ENCODE measurements at regions of chr11 and their contacts with region 1.

Region 1: DNA sequence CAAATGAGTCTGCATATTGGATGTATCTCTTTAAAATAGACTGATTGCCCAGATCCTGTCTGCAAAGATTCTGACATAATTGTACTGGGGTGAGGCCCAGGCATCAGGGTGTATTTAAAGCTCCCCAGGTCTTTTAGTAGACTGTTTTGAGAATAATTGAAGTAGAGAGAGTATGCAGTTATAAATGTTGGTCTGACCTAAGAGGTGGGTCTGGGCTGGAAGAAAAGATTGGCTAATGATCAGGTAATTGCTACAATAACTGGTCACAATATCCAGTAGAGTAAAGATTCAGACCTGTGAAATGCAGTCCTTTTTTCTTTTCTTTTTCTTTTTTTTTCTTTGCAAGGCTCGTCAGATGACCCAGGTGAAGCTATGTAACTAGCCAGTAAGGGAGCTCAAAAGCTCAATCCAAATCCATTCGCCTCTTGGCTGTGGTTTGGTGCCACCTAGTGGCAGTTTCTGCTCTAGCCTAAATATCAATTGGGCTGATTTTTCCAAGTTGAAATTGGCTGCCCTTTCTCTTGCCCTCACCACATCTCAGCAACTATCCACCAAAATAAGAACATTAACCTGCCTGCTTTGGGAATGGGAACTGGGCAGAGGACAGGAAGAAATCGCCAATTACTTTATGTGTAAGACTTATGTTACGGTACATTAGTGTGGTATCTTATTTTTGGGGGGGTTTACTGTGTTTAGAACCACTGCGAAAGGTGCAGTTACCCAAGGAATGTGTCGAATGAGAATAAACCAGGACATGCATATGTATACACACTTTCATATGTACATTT is 45.9 kb downstream of the ZNF143 start:
- DNase-seq: peak; percentile 61 to 87 (median 71)
- ATAC-seq: peak; percentile 97
- H3K4me3 ChIP-seq: no peak overlapping the region
- H3K27ac ChIP-seq: no peak overlapping the region
- H3K4me1 ChIP-seq: no peaks in the 10 kb centered on the region
- H3K27me3 ChIP-seq: no peaks in the 10 kb centered on the region
- CTCF ChIP-seq: peak; percentile 85 to 94 (median 86)
- EP300 ChIP-seq: no peak
- POLR2A ChIP-seq: no peak
- RAD21 ChIP-seq: peak; percentile 87 to 94

Region 2: GRCh38 chr11:9109939-9110731 is 396.5 kb before region 1 on chr11:
- CTCF ChIA-PET with region 1: no interaction called
- POLR2A ChIA-PET with region 1: no interaction called
- in situ Hi-C with region 1: no loop called
- intact Hi-C with region 1: no loop called
- DNase-seq: no peak
- ATAC-seq: no peak
- H3K4me3 ChIP-seq: no peak overlapping the region
- H3K27ac ChIP-seq: no peak overlapping the region
- H3K4me1 ChIP-seq: no peaks in the 10 kb centered on the region
- H3K27me3 ChIP-seq: no peaks in the 10 kb centered on the region
- CTCF ChIP-seq: no peak
- EP300 ChIP-seq: no peak
- POLR2A ChIP-seq: no peak
- RAD21 ChIP-seq: no peak

Region 3: DNA sequence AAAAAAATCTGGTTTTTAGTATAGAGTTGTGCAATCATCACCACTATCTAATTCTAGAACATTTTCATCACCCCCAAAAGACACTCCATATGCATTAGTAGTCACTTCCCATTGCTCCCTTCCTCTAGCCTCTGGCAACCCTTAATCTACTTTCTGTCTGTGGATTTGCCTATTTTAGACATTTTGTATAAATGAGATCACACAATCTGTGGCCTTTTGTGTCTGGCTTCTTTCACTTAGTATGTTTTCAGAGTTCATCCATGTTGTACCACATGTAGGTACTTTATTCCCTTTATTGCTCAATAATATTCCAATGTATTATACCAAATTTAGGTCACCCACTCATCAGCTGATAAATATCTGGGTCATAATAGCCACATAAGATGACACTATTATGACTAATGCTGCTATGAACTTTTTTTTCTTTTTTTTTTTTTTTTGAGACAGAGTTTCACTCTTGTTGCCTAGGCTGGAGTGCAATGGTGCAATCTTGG is 347.7 kb before region 1 on chr11:
- CTCF ChIA-PET with region 1: no interaction called
- POLR2A ChIA-PET with region 1: no interaction called
- in situ Hi-C with region 1: loop called (anchors 5 kb)
- intact Hi-C with region 1: no loop called
- DNase-seq: no peak
- ATAC-seq: no peak
- H3K4me3 ChIP-seq: no peak overlapping the region
- H3K27ac ChIP-seq: no peak overlapping the region
- H3K4me1 ChIP-seq: peaks cover 4 to 5% of the 10 kb centered on the region in 2 experiments; a peak in 3 of 5 replicates
- H3K27me3 ChIP-seq: no peaks in the 10 kb centered on the region
- CTCF ChIP-seq: no peak
- EP300 ChIP-seq: no peak
- POLR2A ChIP-seq: no peak
- RAD21 ChIP-seq: no peak

Region 4: GRCh38 chr11:9170450-9170849 is 336.2 kb before region 1 on chr11:
- CTCF ChIA-PET with region 1: no interaction called
- POLR2A ChIA-PET with region 1: no interaction called
- in situ Hi-C with region 1: no loop called
- intact Hi-C with region 1: loop called (anchors 2 kb)
- DNase-seq: no peak
- ATAC-seq: no peak
- H3K4me3 ChIP-seq: no peak overlapping the region
- H3K27ac ChIP-seq: no peak overlapping the region; the same call in 2 of the 3 replicates
- H3K4me1 ChIP-seq: peaks cover 0 to 7% of the 10 kb centered on the region in 2 experiments; a peak in 3 of 5 replicates
- H3K27me3 ChIP-seq: no peaks in the 10 kb centered on the region
- CTCF ChIP-seq: no peak
- EP300 ChIP-seq: no peak
- POLR2A ChIP-seq: no peak
- RAD21 ChIP-seq: no peak

Region 5: GRCh38 chr11:9273376-9274336 is 233.0 kb before region 1 on chr11:
- CTCF ChIA-PET with region 1: no interaction called
- POLR2A ChIA-PET with region 1: no interaction called
- in situ Hi-C with region 1: no loop called
- intact Hi-C with region 1: loop called (anchors 10 kb)
- DNase-seq: no peak
- ATAC-seq: peak; percentile 10; the same call in 2 of the 3 replicates
- H3K4me3 ChIP-seq: no peak overlapping the region
- H3K27ac ChIP-seq: no peak overlapping the region
- H3K4me1 ChIP-seq: no peaks in the 10 kb centered on the region
- H3K27me3 ChIP-seq: no peaks in the 10 kb centered on the region
- CTCF ChIP-seq: no peak
- EP300 ChIP-seq: no peak
- POLR2A ChIP-seq: no peak
- RAD21 ChIP-seq: no peak

Region 6: GRCh38 chr11:9448576-9449352 is 57.9 kb before region 1 on chr11:
- CTCF ChIA-PET with region 1: no interaction called
- POLR2A ChIA-PET with region 1: no interaction called
- in situ Hi-C with region 1: no loop called
- intact Hi-C with region 1: loop called (anchors 5 kb)
- DNase-seq: no peak
- ATAC-seq: peak; percentile 32
- H3K4me3 ChIP-seq: no peak overlapping the region
- H3K27ac ChIP-seq: no peak overlapping the region
- H3K4me1 ChIP-seq: no peaks in the 10 kb centered on the region
- H3K27me3 ChIP-seq: no peaks in the 10 kb centered on the region
- CTCF ChIP-seq: no peak
- EP300 ChIP-seq: no peak
- POLR2A ChIP-seq: peak; percentile 64
- RAD21 ChIP-seq: no peak

Measured in K562 (cell line).